Gastrocnemius medialis (tissue), 4 donors: ENCODE measurements at regions of chr16 and their contacts with region 1.

Region 1: GRCh38 chr16:3509470-3509928 is 8.7 kb downstream of the CLUAP1 start:
- DNase-seq: no peak
- ATAC-seq: no peak
- H3K4me3 ChIP-seq: no peak overlapping the region
- H3K27ac ChIP-seq: no peak overlapping the region
- H3K4me1 ChIP-seq: no peaks in the 10 kb centered on the region
- H3K27me3 ChIP-seq: no peaks in the 10 kb centered on the region
- CTCF ChIP-seq: no peak
- POLR2A ChIP-seq: no peak

Region 2: GRCh38 chr16:3150346-3151218 is 358.9 kb before region 1 on chr16:
- in situ Hi-C with region 1: no loop called
- intact Hi-C with region 1: loop called (anchors 10 kb)
- DNase-seq: peak; percentile 77 to 88
- ATAC-seq: peak; percentile 83 to 86
- H3K4me3 ChIP-seq: peak overlapping the region; percentile 67 to 87 (median 67)
- H3K27ac ChIP-seq: peak overlapping the region; percentile 68 to 78 (median 72)
- H3K4me1 ChIP-seq: peaks cover 13% of the 10 kb centered on the region in 2 donors
- H3K27me3 ChIP-seq: peaks cover 9 to 22% (median 11%) of the 10 kb centered on the region in 3 donors
- CTCF ChIP-seq: no peak
- POLR2A ChIP-seq: no peak

Region 3: GRCh38 chr16:3182608-3183444 is 326.7 kb before region 1 on chr16:
- in situ Hi-C with region 1: no loop called
- intact Hi-C with region 1: loop called (anchors 10 kb)
- DNase-seq: no peak
- ATAC-seq: no peak
- H3K4me3 ChIP-seq: peak overlapping the region in 3 of 4 donors; percentile 9 to 15 (median 13)
- H3K27ac ChIP-seq: no peak overlapping the region
- H3K4me1 ChIP-seq: peaks cover 0 to 3% of the 10 kb centered on the region in 2 donors
- H3K27me3 ChIP-seq: peaks cover 83 to 99% (median 89%) of the 10 kb centered on the region in 3 donors
- CTCF ChIP-seq: peak in 2 of 5 experiments; percentile 11 to 37
- POLR2A ChIP-seq: no peak

Region 4: GRCh38 chr16:3611146-3611975 is 101.9 kb after region 1 on chr16 and contains the start of gene SLX4:
- in situ Hi-C with region 1: no loop called
- intact Hi-C with region 1: no loop called
- DNase-seq: peak; percentile 72 to 86
- ATAC-seq: peak; percentile 91 to 96
- H3K4me3 ChIP-seq: peak within 1 kb of the TSS; percentile 86 to 100 (median 98)
- H3K27ac ChIP-seq: peak within 1 kb of the TSS; percentile 77 to 92 (median 88)
- H3K4me1 ChIP-seq: peaks cover 16 to 23% of the 10 kb centered on the region in 2 donors
- H3K27me3 ChIP-seq: no peaks in the 10 kb centered on the region
- CTCF ChIP-seq: no peak
- POLR2A ChIP-seq: peak; percentile 76 to 79
- total RNA-seq, gene SLX4: 1.8 to 3.6 (median 2.8) TPM